Endothelial cell of umbilical vein (primary cell): ENCODE measurements at regions of chr12 and their contacts with region 1.

Region 1: DNA sequence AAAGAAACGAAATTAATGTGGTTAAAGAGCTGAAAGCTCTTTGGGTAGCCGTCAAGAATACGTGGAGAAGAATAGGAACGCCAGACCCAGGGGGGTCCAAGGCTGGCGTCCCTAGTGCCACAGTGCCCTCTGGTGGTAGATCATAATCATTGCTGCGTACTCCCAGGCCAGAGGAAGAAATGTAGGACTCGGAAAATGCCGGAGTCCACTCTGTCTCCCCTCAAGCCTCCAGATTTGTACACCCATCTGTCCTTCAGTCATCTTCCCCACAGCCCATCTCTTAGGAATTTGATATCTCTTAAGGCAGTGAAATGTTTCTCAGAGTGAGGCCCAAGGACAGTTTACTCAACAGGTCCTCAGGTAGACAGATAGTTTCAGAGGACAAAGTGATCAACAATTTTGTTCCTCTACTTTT is 25.4 kb upstream of the PLEKHG6 start:
- DNase-seq: peak; percentile 76
- H3K4me3 ChIP-seq: no peak overlapping the region
- H3K27ac ChIP-seq: peak overlapping the region; percentile 63
- H3K4me1 ChIP-seq: peaks cover 28% of the 10 kb centered on the region
- H3K27me3 ChIP-seq: no peaks in the 10 kb centered on the region
- CTCF ChIP-seq: peak; percentile 81 to 91
- POLR2A ChIP-seq: no peak

Region 2: GRCh38 chr12:5745265-5745888 is 539.7 kb before region 1 on chr12:
- CTCF ChIA-PET with region 1: interaction called, 18 read pairs
- POLR2A ChIA-PET with region 1: no interaction called
- dilution Hi-C with region 1: no loop called
- intact Hi-C with region 1: loop called (anchors 1 kb)
- DNase-seq: peak; percentile 93
- H3K4me3 ChIP-seq: no peak overlapping the region
- H3K27ac ChIP-seq: peak overlapping the region; percentile 39
- H3K4me1 ChIP-seq: peaks cover 16% of the 10 kb centered on the region
- H3K27me3 ChIP-seq: no peaks in the 10 kb centered on the region
- CTCF ChIP-seq: peak; percentile 93 to 95
- POLR2A ChIP-seq: no peak

Region 3: GRCh38 chr12:6056406-6057240 is 228.4 kb before region 1 on chr12:
- CTCF ChIA-PET with region 1: interaction called, 14 read pairs
- POLR2A ChIA-PET with region 1: no interaction called
- dilution Hi-C with region 1: no loop called
- intact Hi-C with region 1: no loop called
- DNase-seq: no peak
- H3K4me3 ChIP-seq: no peak overlapping the region
- H3K27ac ChIP-seq: no peak overlapping the region
- H3K4me1 ChIP-seq: peaks cover 38% of the 10 kb centered on the region
- H3K27me3 ChIP-seq: no peaks in the 10 kb centered on the region
- CTCF ChIP-seq: peak; percentile 25 to 52
- POLR2A ChIP-seq: no peak

Region 4: GRCh38 chr12:6074979-6075585 is 210.0 kb before region 1 on chr12:
- CTCF ChIA-PET with region 1: interaction called, 11 read pairs
- POLR2A ChIA-PET with region 1: interaction called, 7 read pairs
- dilution Hi-C with region 1: no loop called
- intact Hi-C with region 1: no loop called
- DNase-seq: peak; percentile 49
- H3K4me3 ChIP-seq: no peak overlapping the region
- H3K27ac ChIP-seq: peak overlapping the region; percentile 80
- H3K4me1 ChIP-seq: peaks cover 86% of the 10 kb centered on the region
- H3K27me3 ChIP-seq: no peaks in the 10 kb centered on the region
- CTCF ChIP-seq: peak in 1 of 2 donors; percentile 5
- POLR2A ChIP-seq: peak; percentile 67

Region 5: DNA sequence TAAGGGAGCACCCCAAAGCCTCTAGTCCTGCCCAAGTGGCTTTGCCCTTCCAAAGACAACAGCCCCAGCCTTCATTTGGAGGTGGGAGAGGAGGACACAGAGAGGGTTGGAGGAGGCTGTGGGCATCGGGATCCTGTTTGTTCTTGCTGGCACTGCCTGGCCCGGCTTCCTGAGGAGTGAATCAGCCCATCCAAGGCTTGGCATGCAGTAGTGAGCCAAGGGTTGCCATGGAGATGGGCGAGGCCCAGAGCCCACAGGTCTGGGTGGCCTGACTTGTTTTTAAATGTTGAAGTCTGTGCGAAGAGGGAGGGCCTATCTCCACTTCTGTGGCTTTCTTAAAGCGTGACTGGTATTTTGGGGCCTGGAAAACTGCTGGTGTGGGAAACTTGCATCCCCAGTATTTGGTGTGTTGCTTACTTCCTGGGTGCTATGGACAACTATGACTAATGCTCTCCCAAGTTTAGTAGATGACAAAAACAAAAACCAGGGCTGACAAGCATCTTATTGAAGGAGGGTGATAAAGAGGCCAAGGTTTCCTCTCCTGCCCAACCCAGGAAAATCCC is 69.1 kb before region 1 on chr12:
- CTCF ChIA-PET with region 1: interaction called, 28 read pairs
- POLR2A ChIA-PET with region 1: no interaction called
- dilution Hi-C with region 1: no loop called
- intact Hi-C with region 1: no loop called
- DNase-seq: peak; percentile 92
- H3K4me3 ChIP-seq: no peak overlapping the region
- H3K27ac ChIP-seq: peak overlapping the region; percentile 68
- H3K4me1 ChIP-seq: peaks cover 69% of the 10 kb centered on the region
- H3K27me3 ChIP-seq: no peaks in the 10 kb centered on the region
- CTCF ChIP-seq: no peak
- POLR2A ChIP-seq: no peak

Region 6: GRCh38 chr12:6295094-6295811 is 10.2 kb after region 1 on chr12:
- CTCF ChIA-PET with region 1: interaction called, 10 read pairs
- POLR2A ChIA-PET with region 1: no interaction called
- dilution Hi-C with region 1: no loop called
- intact Hi-C with region 1: loop called (anchors 1 kb)
- DNase-seq: peak; percentile 90
- H3K4me3 ChIP-seq: no peak overlapping the region
- H3K27ac ChIP-seq: peak overlapping the region; percentile 86
- H3K4me1 ChIP-seq: peaks cover 13% of the 10 kb centered on the region
- H3K27me3 ChIP-seq: no peaks in the 10 kb centered on the region
- CTCF ChIP-seq: no peak
- POLR2A ChIP-seq: no peak

Region 7: DNA sequence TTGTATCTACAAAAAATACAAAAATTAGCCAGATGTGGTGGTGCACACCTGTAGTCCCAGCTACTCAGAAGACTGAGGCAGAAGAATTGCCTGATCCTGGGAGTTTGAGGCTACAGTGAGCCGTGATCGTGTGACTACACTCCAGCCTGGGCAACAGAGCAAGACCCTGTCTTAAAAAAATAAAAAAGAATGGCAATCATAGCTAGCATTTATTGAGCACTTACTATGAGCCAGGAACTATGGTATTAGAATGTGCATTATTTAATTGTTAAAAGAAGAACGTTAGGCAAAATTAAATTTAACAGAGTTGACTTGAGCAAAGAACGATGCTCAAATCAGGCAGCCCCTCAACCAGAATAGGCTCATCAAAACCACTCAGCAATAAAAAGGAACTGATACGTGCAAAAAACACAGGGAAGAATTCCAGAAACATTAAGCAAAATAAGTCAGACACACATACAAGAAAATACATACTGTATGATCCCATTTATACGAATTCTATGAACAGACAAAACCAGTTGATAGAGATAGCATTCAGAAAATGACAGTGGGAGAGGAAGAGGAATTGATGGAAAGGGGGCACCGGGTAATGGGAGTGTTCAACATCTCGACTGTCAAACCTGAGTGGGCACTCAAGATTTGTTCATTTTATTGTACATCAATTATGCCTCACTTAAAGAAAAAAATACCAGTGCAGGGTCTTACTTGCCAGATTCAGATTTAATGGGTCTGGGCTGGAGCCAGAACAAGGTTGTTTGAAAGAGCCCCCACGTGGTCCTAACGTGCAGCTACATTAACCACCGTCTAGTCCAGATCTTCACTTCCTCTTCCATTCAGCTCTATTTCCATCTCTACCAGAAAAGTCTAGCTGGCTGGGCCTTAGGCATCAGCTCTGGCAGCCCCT is 82.2 kb after region 1 on chr12:
- CTCF ChIA-PET with region 1: no interaction called
- POLR2A ChIA-PET with region 1: no interaction called
- dilution Hi-C with region 1: no loop called
- intact Hi-C with region 1: no loop called
- DNase-seq: peak; percentile 67
- H3K4me3 ChIP-seq: no peak overlapping the region
- H3K27ac ChIP-seq: no peak overlapping the region
- H3K4me1 ChIP-seq: peaks cover 31% of the 10 kb centered on the region
- H3K27me3 ChIP-seq: no peaks in the 10 kb centered on the region
- CTCF ChIP-seq: peak in 1 of 2 donors; percentile 49
- POLR2A ChIP-seq: no peak

Region 8: DNA sequence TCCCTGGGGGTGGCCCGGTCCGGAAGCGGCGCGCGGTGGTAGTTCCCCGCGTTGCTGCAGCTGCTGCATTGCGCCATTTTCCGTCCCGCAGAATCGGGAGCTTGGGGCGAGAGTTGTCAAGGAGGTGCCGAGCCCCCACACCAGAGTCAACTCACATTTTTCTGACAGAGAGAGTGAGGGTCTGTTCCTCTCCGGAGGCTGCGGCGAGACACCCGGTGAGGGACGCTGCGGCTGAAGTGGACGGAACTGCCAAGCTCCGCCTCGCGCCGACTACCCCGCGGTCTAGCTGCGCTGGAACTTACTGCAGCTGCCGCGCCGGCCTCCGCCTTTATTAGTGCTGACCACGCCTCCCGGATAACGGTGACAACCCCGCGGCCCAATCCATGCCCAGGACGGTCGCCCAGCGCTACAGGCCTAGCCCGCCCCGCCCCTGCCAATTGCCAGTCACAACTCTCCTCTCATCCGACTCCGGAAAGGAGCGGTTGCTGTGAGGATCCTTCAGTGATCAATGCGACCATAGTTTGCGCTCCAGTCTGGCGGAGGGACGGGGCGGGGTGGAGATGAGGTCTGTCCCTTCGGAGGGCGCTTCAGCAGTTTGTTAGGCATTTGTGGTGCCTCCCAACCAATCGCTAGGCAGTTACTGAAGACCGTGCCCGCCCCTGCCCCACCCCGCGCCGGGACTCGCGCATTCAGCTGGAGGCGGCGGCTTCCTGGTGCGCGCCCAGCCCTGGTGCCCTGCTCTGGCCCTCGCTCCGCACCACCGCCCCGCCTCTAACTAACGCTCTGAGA is 185.5 kb after region 1 on chr12 and contains the start of gene VAMP1:
- CTCF ChIA-PET with region 1: interaction called, 20 read pairs
- POLR2A ChIA-PET with region 1: no interaction called
- dilution Hi-C with region 1: no loop called
- intact Hi-C with region 1: no loop called
- DNase-seq: peak; percentile 97
- H3K4me3 ChIP-seq: peak within 1 kb of the TSS; percentile 67 to 84 (median 71)
- H3K27ac ChIP-seq: peak within 1 kb of the TSS; percentile 49
- H3K4me1 ChIP-seq: peaks cover 16% of the 10 kb centered on the region
- H3K27me3 ChIP-seq: peaks cover 0 to 5% of the 10 kb centered on the region in 2 experiments
- CTCF ChIP-seq: no peak
- POLR2A ChIP-seq: peak; percentile 99
- total RNA-seq, gene VAMP1: 6.6 and 7.0 TPM in 2 replicates